PC-9 (cell line): ENCODE measurements at regions of chr20 and their contacts with region 1.

Region 1: DNA sequence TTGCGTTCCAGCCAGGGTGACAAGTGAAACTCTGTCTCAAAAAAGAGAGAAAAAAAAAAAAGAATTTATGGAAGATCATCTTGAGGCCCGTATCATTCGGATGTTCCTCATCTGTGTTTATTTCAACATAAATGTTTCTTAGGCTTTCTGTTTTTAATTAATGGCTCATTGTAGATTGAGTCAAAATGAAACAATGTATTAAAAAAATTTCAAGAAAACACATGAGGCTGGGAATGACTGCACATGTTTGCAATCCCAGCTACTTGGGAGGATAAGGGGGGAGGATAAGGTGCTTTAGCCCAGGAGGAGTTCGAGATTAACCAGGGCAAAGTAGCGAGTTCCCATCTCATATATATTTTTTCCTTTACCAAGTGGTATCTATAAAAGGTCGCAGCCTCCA is 47.3 kb downstream of the ITCH start:
- DNase-seq: no peak
- H3K4me3 ChIP-seq: no peak overlapping the region
- H3K27ac ChIP-seq: 0 out of 2 replicates have a peak overlapping the region, but pooled peaks have one; percentile 24
- H3K4me1 ChIP-seq: peaks cover 24% of the 10 kb centered on the region; the same call in 1 of the 2 replicates
- H3K27me3 ChIP-seq: no peaks in the 10 kb centered on the region
- CTCF ChIP-seq: no peak

Region 2: DNA sequence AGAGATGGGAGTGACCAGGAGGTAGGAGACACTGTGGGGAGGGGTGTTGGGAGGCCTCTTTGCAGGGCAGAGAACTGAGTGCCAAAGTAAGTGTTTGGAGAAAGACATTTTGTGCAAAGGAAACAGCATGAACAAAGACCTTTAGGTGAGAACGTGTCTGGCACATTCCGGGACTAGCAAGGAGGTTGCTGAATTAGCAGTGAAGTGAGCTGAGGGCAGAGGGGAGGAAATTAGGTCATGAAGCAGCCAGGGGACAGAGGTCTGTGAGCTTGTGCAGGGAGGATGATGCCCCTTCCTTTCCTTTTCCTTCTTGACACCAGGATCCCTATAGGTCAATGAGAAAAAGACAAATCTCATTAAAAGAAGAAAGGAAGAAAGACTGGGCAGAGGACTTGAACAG is 85.8 kb before region 1 on chr20:
- CTCF ChIA-PET with region 1: no interaction called
- POLR2A ChIA-PET with region 1: no interaction called
- intact Hi-C with region 1: no loop called
- DNase-seq: no peak
- H3K4me3 ChIP-seq: no peak overlapping the region
- H3K27ac ChIP-seq: no peak overlapping the region
- H3K4me1 ChIP-seq: peaks cover 12% of the 10 kb centered on the region
- H3K27me3 ChIP-seq: no peaks in the 10 kb centered on the region
- CTCF ChIP-seq: no peak

Region 3: DNA sequence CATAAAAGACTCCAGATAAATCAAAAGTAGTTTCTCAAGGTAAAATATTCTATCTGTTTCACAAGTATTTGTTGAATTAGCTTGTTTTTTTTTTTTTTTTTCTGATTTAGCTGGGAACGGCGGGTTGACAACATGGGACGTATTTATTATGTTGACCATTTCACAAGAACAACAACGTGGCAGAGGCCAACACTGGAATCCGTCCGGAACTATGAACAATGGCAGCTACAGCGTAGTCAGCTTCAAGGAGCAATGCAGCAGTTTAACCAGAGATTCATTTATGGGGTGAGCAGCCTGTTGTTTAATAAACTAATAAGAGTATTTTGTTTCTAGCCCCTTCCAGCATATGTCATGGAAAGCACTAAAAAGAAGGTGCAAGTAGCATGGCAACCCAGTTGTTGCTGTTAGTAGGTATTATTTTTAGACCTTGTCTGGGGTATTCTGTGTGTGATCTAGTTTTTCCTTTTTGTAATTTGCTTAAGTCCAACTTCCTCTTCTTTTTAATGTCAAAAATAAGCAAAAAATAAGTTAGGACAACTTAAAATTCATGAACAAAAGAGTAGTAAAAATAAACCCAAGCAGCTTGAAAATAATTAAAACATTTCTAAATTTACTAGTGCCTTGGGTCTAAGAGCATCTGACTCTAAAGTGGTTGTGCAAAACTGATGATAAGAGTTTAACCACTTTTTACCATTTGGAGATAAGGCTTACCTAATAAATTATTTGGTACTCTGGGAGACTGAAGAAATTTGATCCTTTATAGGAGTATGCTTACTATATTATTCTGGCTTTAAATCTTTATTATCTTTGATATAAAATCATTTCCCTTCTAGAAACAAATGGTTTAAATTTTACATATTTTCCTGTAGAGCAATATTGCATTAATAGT is 35.1 kb after region 1 on chr20:
- CTCF ChIA-PET with region 1: interaction called, 4 read pairs
- POLR2A ChIA-PET with region 1: no interaction called
- intact Hi-C with region 1: loop called (anchors 5 kb)
- DNase-seq: no peak
- H3K4me3 ChIP-seq: no peak overlapping the region
- H3K27ac ChIP-seq: peak overlapping the region; percentile 9; the same call in 1 of the 2 replicates
- H3K4me1 ChIP-seq: no peaks in the 10 kb centered on the region
- H3K27me3 ChIP-seq: no peaks in the 10 kb centered on the region
- CTCF ChIP-seq: no peak

Region 4: GRCh38 chr20:34452281-34452982 is 42.1 kb after region 1 on chr20:
- CTCF ChIA-PET with region 1: interaction called, 3 read pairs
- POLR2A ChIA-PET with region 1: interaction called, 13 read pairs
- intact Hi-C with region 1: loop called (anchors 5 kb)
- DNase-seq: no peak
- H3K4me3 ChIP-seq: no peak overlapping the region
- H3K27ac ChIP-seq: no peak overlapping the region
- H3K4me1 ChIP-seq: no peaks in the 10 kb centered on the region
- H3K27me3 ChIP-seq: no peaks in the 10 kb centered on the region
- CTCF ChIP-seq: no peak